ENCODE measurements at regions of chr11 and their contacts with region 1.

Region 1: DNA sequence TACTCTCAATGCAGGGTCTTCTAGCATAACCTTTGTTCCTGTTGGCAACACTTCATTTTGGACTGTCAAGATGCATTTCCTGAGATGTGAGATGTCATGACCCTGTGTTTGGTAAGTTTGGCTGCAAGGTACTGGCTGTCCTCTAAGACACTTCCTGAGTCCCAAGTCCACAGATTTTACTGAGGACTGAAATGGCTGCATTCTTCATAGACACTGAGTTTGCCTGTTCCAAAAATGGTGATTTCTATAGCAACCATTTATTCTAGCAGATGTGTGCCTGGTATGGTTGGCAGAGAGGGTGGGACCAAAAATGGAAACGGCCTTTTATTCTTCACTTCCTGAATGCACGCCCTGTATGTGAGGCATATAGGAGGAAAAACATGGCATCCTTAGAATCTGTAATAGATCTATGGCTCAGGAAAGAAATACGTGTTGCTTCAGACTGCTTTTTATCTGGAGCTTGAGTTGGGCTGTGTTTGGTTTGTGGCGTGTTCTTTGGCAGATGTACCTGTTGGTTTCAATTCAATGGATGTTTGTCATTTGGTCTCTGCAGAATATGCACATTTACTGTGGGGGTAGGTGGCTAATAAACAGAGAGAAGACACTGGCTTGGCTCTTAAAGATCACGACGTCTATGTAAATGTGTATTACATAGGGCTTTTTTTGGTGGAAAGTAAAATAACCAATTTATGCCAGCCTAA is 62.4 kb downstream of the ZBTB16 start:
- DNase-seq: no peak
- H3K4me3 ChIP-seq: no peak overlapping the region
- H3K27ac ChIP-seq: no peak overlapping the region
- H3K4me1 ChIP-seq: peaks cover 0 to 14% of the 10 kb centered on the region in 2 donors
- H3K27me3 ChIP-seq: no peaks in the 10 kb centered on the region
- CTCF ChIP-seq: no peak
- POLR2A ChIP-seq: no peak

Region 2: DNA sequence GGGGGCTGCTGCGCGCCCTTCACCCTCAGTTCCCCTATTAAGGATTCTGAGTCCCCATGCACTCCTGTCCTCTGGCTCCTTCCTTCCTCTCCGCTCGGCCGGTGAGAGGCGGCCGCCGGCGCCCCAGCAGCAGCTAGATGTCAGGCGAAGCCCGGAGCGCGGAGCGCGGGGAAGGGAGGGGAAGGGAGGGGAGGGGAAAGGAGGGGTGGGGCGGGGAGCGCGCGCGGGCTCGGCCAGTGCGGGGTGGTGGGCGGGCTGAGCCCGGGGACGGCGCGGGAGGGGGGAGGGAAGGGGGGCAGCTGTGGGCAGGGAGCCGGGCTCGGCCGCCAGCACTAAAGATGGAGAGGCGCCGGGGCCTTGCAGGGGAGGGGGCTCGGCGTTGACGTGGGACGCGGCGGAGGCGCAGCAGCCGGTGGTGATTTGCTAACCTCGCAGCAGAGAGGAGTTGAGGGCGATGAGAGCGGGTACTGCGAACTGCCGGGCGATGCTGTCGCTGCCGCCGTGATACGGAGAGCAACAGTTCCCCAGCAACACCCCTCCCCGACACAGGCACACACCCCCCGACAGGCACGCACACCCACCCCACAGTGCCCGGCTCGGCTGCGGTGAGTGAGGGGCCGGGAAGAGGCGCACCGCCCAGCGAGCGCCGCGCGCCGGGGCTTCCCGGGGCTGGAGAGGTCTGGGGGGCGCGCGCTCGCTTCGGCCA is 62.5 kb before region 1 on chr11 and contains the start of gene ZBTB16:
- intact Hi-C with region 1: loop called (anchors 10 kb)
- DNase-seq: peak; percentile 87 to 91
- H3K4me3 ChIP-seq: peak within 1 kb of the TSS; percentile 98
- H3K27ac ChIP-seq: peak within 1 kb of the TSS; percentile 99 to 100
- H3K4me1 ChIP-seq: peaks cover 2 to 11% of the 10 kb centered on the region in 2 donors
- H3K27me3 ChIP-seq: no peaks in the 10 kb centered on the region
- CTCF ChIP-seq: peak; percentile 54 to 78 (median 66)
- POLR2A ChIP-seq: peak; percentile 92 to 95
- total RNA-seq, gene ZBTB16: 25.5 to 302 (median 151) TPM